ENCODE measurements at regions of chr6 and their contacts with region 1.

Region 1: DNA sequence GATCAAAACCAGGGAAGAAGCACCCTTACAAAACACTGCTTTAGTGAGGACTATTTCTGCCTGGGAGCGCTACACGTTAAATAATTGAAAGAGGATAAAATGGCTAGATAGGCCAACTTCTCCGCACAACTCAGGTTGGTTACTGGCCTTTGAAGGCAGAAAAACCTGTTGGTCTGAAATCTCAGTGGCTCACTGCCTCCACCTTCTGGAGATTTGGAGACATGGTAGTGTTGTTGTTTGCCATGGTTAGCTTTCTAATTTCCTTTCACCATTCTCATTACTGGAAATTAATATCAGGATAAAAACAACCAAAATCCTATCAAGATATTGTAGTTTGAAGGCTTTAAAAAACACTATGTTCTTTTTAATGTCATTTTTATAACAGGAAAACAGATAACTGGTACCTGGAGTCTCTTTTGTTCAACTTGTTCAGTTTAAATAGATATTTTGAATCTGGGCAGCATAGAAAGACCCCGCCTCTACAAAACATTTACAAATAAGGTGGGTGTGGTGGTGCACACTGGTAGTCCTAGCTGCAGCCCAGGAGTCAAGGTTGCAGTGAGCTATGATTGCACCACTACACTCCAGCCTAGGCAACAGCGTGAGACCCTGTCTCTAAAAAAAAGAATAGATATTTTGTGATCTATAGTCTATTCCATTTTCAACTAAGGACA is 27.5 kb upstream of the BCLAF1 start:
- DNase-seq: peak; percentile 77
- ATAC-seq: peak; percentile 90
- H3K4me3 Mint-ChIP-seq: no peak overlapping the region
- H3K27ac Mint-ChIP-seq: no peak overlapping the region
- H3K4me1 Mint-ChIP-seq: peaks cover 4% of the 10 kb centered on the region
- H3K27me3 Mint-ChIP-seq: peaks cover 8% of the 10 kb centered on the region

Region 2: GRCh38 chr6:136249811-136250685 is 67.1 kb before region 1 on chr6 and contains the start of gene MTFR2:
- CTCF ChIA-PET with region 1: interaction called, 32 read pairs
- POLR2A ChIA-PET with region 1: no interaction called
- DNase-seq: peak; percentile 97
- ATAC-seq: peak; percentile 92
- H3K4me3 Mint-ChIP-seq: peak within 1 kb of the TSS; percentile 92
- H3K27ac Mint-ChIP-seq: peak within 1 kb of the TSS; percentile 94
- H3K4me1 Mint-ChIP-seq: peaks cover 48% of the 10 kb centered on the region
- H3K27me3 Mint-ChIP-seq: no peaks in the 10 kb centered on the region
- total RNA-seq, gene MTFR2: 27.2 to 27.9 TPM

Region 3: GRCh38 chr6:136282906-136283305 is 34.3 kb before region 1 on chr6:
- CTCF ChIA-PET with region 1: interaction called, 28 read pairs
- POLR2A ChIA-PET with region 1: no interaction called
- DNase-seq: no peak
- ATAC-seq: peak; percentile 29
- H3K4me3 Mint-ChIP-seq: peak overlapping the region; percentile 31
- H3K27ac Mint-ChIP-seq: no peak overlapping the region
- H3K4me1 Mint-ChIP-seq: peaks cover 70% of the 10 kb centered on the region
- H3K27me3 Mint-ChIP-seq: no peaks in the 10 kb centered on the region